GM10248 (cell line): ENCODE measurements at regions of chr7 and their contacts with region 1.

Region 1: GRCh38 chr7:19713676-19714075 is 4.8 kb upstream of the POLR1F start:
- DNase-seq: no peak
- CTCF ChIP-seq: peak; percentile 56

Region 2: DNA sequence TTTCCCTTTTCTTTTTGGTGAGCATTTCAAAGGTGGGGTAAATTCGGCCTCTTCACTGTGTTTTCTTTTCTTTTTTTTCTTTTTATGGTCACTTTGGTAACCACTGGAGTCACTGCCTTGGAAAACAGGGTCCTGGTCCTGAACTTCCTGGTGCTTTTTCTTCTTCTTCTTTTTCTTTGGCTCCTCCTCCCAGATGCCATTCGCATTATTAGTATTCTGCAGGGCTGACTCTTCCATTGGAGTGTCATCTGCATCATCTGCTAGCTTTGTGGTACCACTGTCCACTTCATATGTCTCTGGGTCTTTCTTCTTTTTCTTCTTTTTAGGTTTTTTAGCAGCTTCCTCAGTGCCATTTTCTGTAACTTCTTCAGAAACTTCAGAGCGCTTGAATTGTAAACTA is 15.3 kb before region 1 on chr7:
- CTCF ChIA-PET with region 1: interaction called, 28 read pairs
- POLR2A ChIA-PET with region 1: no interaction called
- DNase-seq: no peak
- CTCF ChIP-seq: no peak

Region 3: DNA sequence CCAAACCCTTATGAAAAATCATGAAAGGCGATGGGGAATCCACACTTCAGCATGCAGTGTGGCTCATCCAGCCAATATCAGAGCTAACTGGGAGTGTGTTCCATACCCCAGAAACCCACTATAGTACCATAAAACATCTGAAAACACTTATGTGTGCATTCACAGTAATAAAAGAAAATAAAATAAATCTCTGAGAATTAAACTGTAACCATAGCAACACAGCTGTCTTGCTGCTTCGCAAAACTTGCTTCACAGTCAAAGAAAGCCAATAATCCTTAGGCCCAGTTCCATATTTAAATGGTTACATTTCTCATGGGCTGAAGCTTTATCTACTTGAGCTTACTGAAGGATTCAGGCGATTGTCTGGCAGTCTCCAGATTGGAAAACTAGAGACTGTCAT is 15.0 kb after region 1 on chr7:
- CTCF ChIA-PET with region 1: interaction called, 17 read pairs
- POLR2A ChIA-PET with region 1: interaction called, 3 read pairs
- DNase-seq: no peak
- CTCF ChIP-seq: no peak

Region 4: DNA sequence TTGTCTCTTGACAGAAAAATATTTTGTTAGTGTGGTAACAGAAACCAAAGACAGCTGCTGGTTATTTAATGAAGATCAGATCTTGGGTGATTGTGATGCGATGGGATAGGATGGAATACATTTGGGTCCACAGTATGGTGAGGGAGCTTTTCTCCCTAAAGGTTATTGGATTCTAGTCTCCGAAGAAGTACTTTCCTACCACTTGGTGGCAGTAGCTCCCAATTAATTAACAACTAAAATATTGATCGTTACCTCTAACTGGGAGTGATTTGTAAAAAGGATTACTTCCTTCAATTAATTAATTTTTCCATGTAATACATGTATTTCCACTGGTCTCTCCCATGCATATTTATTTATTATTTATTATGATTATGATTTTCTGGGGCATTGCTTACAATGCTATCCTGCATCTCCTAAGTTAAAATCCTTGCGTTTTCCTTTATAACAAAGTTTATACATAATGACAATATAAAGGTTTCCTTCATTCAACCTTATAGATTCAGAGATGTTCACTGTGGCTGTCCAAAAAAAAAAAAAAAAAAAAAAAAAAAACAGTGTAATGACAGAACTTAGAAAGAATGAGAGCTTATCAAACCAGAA is 34.2 kb after region 1 on chr7:
- CTCF ChIA-PET with region 1: interaction called, 32 read pairs
- POLR2A ChIA-PET with region 1: no interaction called
- DNase-seq: peak; percentile 40
- CTCF ChIP-seq: peak; percentile 42